Activated CD4-positive, alpha-beta T cell treated with anti-CD3 and anti-CD28 coated beads, Interleukin-2, amount 10 ng/mL, durations not matched to agents 7 days and 5 days (primary cell): ENCODE measurements at regions of chr13 and their contacts with region 1.

Region 1: GRCh38 chr13:97240788-97241734 is 18.9 kb downstream of the MBNL2 start:
- DNase-seq: no peak
- H3K4me3 Mint-ChIP-seq: no peak overlapping the region
- H3K27ac Mint-ChIP-seq: no peak overlapping the region
- H3K4me1 Mint-ChIP-seq: peaks cover 20% of the 10 kb centered on the region
- H3K27me3 Mint-ChIP-seq: no peaks in the 10 kb centered on the region

Region 2: GRCh38 chr13:97226788-97227627 is 14.1 kb before region 1 on chr13:
- CTCF ChIA-PET with region 1: interaction called, 13 read pairs
- POLR2A ChIA-PET with region 1: no interaction called
- DNase-seq: peak; percentile 52
- H3K4me3 Mint-ChIP-seq: peak overlapping the region; percentile 69
- H3K27ac Mint-ChIP-seq: peak overlapping the region; percentile 85
- H3K4me1 Mint-ChIP-seq: peaks cover 54% of the 10 kb centered on the region
- H3K27me3 Mint-ChIP-seq: no peaks in the 10 kb centered on the region